Right ventricle myocardium inferior (tissue), 1 donor: ENCODE measurements at regions of chr10 and their contacts with region 1.

Region 1: DNA sequence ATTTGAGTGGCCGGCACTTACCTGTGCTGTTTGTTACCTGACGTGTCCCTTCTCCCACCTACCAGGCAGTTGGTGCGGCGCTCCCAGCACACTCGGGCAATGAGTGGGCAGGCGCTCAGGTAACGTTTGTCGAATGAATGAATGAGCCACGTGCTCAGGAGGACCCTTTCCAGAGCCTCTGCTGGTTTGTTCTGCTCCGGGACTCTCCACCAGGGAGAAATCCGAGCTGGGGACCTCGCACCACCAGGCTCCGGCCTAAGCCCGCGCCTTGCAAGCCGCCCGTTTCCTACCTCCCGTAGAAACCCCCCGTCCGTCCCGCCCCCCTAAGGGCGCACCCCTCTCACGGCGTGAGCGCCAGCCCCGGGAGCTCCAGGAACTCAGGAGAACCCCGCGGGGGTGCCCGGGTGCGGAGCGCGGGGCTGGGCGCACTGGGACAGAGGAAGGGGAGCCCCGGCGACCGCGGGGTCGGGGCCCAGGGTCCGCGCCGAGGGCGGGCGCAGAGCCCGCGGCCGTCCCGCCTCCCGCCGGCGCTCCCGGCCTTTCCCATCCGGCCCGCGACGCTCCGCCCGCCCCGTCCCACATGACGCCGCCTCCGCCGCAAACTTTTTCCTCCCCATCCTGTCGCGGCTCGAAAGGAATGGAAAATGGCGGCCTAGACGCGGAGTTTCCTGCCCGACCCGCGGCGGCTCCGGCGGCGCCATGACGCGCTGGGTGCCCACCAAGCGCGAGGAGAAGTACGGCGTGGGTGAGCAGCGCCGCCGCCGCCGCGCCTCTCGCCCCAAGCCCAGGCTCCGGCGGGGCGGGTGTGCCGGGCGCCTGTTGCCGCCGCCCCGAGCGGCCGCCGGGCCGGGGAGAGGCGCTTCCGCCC is at the start of gene DOCK1:
- DNase-seq: peak; percentile 81
- ATAC-seq: peak; percentile 86
- total RNA-seq, gene DOCK1: 16.8 TPM

Region 2: DNA sequence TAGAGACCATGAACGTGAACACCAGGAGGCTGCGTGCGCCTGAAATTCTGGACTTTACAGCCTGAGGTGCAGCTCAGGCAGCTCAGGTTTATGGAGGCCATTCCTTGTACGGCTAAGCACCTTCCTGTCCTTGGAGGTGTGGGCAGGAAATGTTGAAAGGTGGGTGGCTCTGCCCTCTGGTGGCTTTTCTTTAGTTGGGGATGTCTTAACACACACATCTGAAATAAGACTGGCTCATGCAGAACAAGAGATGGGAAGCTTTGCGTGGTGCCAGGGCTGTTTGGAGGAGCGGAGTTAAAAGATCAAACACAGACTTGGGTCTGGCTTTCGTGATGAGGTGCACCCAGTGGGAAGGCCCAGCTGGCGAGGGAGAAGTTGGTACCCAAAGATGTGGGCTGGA is 64.3 kb after region 1 on chr10:
- intact Hi-C with region 1: loop called (anchors 5 kb)
- DNase-seq: no peak
- ATAC-seq: no peak

Region 3: DNA sequence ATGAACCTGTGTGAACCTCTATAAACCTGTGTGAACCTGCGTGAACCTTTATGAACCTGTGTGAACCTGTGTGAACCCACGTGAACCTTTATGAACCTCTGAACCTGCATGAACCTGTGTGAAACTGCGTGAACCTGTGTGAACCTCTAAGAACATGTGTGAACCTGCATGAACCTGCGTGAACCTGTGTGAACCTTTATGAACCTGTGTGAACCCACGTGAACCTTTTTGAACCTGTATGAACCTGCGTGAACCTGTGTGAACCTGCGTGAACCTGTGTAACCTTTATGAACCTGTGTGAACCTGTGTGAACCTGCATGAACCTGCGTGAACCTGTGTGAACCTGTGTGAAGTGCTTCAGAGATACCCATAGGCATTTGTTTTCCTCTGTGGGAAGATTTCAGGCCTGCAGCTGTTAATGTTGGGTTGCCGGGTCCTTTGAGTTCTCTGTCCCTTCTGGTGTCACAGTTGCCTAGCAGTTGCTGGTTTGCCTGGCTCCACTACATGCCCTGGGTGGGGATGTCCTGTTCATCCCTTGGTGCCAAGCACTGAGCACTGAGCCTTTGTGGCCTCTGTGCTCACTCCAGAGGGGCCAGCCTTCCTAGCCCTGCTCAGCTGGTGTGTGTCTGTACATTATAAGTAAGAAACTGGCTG is 98.1 kb after region 1 on chr10:
- intact Hi-C with region 1: loop called (anchors 5 kb)
- DNase-seq: no peak
- ATAC-seq: no peak